Activated CD4-positive, alpha-beta memory T cell treated with anti-CD3 and anti-CD28 coated beads for 36 hours (primary cell): ENCODE measurements at regions of chr11 and their contacts with region 1.

Region 1: DNA sequence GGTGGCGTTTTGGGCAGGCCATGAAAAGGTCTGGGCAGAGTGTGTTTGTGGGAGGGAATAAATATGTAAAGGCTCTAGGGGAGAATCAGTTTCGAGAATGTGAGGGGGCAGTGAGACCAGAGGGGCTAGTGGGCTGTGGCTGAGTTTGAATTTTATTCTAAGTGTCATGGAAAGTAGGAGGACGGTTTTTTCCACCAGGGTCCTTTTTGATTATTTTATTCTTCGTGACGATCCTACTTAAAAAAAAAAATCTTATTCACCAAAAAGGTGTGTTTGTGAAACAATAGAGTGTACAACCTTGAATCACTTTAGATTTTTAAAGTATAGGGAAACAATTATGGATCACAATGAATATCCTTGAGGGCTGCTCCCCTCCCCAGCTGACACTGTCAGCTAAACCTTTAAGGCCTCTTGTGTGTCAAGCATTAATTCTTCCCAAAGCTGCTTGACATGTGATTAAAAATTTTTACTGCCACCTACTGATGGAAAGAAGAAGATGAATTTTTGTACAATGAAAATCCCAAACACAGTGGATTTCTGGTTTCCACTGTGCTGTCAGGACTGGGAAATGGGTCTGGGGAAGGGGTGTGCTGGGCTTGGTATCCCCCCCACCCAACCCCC is 107.5 kb upstream of the OR4B1 start:
- DNase-seq: no peak
- H3K4me3 Mint-ChIP-seq: no peak overlapping the region
- H3K27ac Mint-ChIP-seq: peak overlapping the region; percentile 92
- H3K4me1 Mint-ChIP-seq: peaks cover 47% of the 10 kb centered on the region
- H3K27me3 Mint-ChIP-seq: no peaks in the 10 kb centered on the region

Region 2: DNA sequence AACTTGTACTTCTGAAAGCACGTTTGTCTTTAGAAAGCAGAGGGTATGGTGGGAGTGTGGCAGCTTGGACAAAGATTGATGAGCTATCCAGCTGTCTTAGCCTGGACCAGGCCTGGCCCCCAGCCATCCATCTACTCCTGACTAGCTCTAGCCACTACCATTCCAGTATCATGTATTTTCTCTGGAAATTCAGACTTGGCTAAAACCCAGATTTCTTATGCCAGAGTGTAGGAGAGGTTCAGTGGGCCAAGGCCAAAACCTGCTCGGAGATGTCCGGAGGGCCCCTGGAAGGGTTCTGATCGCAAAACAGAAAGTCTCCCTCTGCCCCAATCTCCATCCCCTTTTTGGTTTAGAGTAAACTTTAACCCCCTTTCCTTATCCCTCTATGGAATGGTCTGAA is 442.0 kb before region 1 on chr11:
- CTCF ChIA-PET with region 1: no interaction called
- POLR2A ChIA-PET with region 1: no interaction called
- intact Hi-C with region 1: loop called (anchors 10 kb)
- DNase-seq: no peak
- H3K4me3 Mint-ChIP-seq: no peak overlapping the region
- H3K27ac Mint-ChIP-seq: no peak overlapping the region
- H3K4me1 Mint-ChIP-seq: peaks cover 18% of the 10 kb centered on the region
- H3K27me3 Mint-ChIP-seq: no peaks in the 10 kb centered on the region

Region 3: DNA sequence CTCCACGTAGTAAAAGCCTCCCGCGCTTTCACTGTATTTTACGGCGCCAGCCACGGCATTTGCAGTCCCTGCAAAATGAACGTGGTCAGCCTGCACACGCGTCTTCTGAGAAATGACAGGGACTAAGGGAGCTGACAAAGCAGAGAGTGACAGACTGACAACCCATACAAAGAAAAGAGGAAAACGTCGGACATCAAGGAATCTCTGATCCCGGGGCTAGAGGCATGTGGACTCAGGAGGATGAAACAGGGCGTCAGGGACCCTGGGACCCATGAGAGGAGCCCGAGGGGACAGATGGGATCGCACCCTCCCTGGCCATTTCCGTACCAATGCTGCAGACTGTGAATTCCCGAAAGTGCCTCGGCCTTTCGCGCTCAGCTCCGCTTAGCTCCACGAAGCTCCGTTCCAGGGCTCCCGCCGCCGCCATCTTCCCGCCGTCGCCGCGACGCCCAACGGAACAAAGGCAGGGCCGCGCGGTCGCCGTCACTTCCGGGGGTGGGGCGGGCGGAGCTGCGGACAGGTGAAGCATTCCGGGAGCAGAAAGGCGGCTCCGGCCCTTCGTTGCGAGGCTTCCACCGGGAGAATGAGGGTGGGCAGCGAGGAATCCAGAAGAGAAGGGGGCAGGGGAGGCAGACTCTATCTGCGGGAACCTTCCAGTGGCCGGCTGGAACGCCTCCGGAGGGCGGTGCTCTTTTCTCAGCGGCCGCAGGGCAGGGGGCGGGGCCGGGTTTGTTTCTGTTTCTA is 261.1 kb before region 1 on chr11 and contains the start of gene NUP160:
- CTCF ChIA-PET with region 1: interaction called, 4 read pairs
- POLR2A ChIA-PET with region 1: interaction called, 5 read pairs
- intact Hi-C with region 1: loop called (anchors 2 kb)
- DNase-seq: peak; percentile 92
- H3K4me3 Mint-ChIP-seq: peak within 1 kb of the TSS; percentile 98
- H3K27ac Mint-ChIP-seq: peak within 1 kb of the TSS; percentile 97
- H3K4me1 Mint-ChIP-seq: peaks cover 45% of the 10 kb centered on the region
- H3K27me3 Mint-ChIP-seq: no peaks in the 10 kb centered on the region
- total RNA-seq, gene NUP160: 68.0 to 69.5 TPM

Region 4: GRCh38 chr11:47964546-47964945 is 144.6 kb before region 1 on chr11:
- CTCF ChIA-PET with region 1: interaction called, 10 read pairs
- POLR2A ChIA-PET with region 1: no interaction called
- intact Hi-C with region 1: loop called (anchors 1 kb)
- DNase-seq: no peak
- H3K4me3 Mint-ChIP-seq: no peak overlapping the region
- H3K27ac Mint-ChIP-seq: no peak overlapping the region
- H3K4me1 Mint-ChIP-seq: no peaks in the 10 kb centered on the region
- H3K27me3 Mint-ChIP-seq: no peaks in the 10 kb centered on the region

Region 5: GRCh38 chr11:48001438-48002021 is 107.6 kb before region 1 on chr11:
- CTCF ChIA-PET with region 1: interaction called, 10 read pairs
- POLR2A ChIA-PET with region 1: interaction called, 10 read pairs
- intact Hi-C with region 1: loop called (anchors 1 kb)
- DNase-seq: peak; percentile 91
- H3K4me3 Mint-ChIP-seq: peak overlapping the region; percentile 72
- H3K27ac Mint-ChIP-seq: peak overlapping the region; percentile 97
- H3K4me1 Mint-ChIP-seq: peaks cover 84% of the 10 kb centered on the region
- H3K27me3 Mint-ChIP-seq: no peaks in the 10 kb centered on the region

Region 6: DNA sequence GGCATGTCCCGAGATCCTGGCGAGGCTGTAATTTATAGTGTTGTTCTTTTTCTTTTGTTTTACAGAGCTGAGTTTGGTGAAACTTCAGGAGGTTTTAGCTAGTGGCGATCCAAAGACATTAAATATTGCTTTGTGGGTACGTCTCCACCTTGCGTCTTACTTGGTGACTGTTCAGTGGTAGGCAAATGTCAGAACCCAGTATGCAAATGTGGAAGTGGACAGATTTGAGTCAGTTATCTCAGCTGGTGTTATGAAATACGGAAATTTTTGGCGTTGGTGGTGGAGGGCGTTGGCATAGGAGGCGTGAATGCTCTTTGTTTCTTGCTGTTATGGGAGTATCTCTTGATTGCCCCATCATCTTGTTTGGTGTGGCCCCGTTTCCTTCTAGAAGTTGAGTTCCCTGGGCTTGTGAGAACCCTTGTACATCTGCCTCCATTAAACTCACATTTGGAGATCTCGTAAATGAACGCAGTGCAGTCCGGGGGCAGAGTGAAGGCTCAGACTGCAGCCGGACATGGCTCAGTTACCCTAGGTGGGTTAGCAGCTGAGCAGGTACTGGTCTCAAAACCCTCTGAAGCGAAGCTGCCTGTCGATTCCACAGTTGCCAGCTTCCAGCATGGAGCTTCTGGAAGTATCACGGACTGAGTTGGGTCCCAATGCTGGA is 88.9 kb before region 1 on chr11:
- CTCF ChIA-PET with region 1: interaction called, 13 read pairs
- POLR2A ChIA-PET with region 1: interaction called, 4 read pairs
- intact Hi-C with region 1: loop called (anchors 1 kb)
- DNase-seq: peak; percentile 80
- H3K4me3 Mint-ChIP-seq: peak overlapping the region; percentile 68
- H3K27ac Mint-ChIP-seq: peak overlapping the region; percentile 92
- H3K4me1 Mint-ChIP-seq: peaks cover 72% of the 10 kb centered on the region
- H3K27me3 Mint-ChIP-seq: no peaks in the 10 kb centered on the region

Region 7: DNA sequence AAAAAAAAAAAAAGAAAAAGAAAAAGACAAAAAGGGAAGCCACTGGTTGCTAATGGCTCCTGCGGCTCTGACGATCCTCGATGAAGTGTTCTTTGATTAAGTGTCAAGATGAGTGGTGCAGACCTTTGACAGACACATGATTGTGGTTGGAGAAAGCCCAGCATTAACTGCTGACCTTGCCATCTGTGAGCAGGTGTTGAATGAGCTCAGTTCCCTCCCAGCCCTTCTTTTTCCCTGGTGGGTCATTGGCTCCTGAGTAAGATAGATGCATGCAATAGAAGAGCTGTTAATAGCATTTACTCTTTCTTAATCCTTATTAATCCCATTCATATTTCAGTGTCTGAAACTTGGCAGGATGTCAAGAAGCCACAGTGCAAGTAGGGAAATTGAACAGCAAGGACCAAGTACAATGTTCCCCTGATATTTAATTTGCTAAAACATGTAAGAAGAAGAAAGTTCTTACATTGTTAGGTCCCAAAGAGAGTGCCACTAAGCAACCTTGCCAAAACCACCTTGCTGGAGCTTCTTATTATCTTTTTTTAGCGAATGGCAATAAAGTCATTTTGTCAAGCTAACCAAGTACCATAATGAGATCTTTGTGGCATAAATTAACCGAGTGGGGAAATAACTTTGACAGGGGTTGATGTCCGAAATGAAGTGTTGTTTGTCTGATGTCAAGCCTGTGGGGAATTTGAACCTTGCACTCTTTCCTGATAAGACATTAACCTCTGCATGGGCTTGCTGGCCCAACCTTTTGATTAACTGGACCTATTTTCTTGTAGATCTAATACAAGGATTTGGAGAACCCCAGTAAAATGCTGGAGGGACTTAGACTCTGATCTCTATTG is 15.1 kb before region 1 on chr11:
- CTCF ChIA-PET with region 1: interaction called, 30 read pairs
- POLR2A ChIA-PET with region 1: interaction called, 16 read pairs
- intact Hi-C with region 1: loop called (anchors 2 kb)
- DNase-seq: peak; percentile 20
- H3K4me3 Mint-ChIP-seq: no peak overlapping the region
- H3K27ac Mint-ChIP-seq: peak overlapping the region; percentile 3
- H3K4me1 Mint-ChIP-seq: peaks cover 78% of the 10 kb centered on the region
- H3K27me3 Mint-ChIP-seq: no peaks in the 10 kb centered on the region